AG04450 (cell line): ENCODE measurements at regions of chr9 and their contacts with region 1.

Region 1: DNA sequence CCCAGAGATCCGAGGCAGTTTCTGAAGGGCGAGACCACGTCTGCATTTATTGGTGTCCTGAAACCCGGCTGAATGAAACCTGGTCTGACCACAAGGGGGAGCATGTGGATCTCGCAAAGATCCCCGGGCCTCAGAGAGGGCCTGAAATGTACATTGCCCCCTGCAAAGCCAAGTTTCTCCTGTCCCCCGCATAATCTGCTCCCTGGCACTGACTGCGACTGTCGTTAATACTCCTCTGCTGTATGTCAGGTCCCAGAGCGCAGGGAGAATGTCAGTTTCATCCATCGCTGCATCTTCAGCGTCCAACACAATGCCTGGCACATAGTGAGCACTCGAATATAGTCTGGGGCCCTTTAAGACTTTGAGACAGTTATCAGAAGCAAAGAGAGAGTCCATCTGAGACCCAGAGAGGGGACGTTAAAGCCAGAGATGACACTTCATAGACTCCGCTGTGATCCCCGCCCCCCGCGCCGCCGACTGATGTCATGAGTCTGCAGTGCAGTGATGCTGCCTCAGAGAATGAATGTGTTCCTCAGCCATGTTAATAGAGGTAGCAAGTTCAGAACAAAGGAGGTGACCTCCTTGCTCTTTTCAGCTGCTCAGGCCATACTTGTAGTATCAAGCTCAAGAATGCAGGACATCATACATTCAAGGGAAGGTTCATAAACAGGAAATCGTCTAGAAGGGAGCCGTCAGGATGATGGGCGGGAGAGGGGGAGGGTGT is 74.5 kb upstream of the BARHL1 start:
- DNase-seq: peak; percentile 34
- H3K4me3 ChIP-seq: no peak overlapping the region
- H3K27ac ChIP-seq: no peak overlapping the region
- H3K27me3 ChIP-seq: peaks cover 45% of the 10 kb centered on the region
- CTCF ChIP-seq: peak; percentile 84

Region 2: DNA sequence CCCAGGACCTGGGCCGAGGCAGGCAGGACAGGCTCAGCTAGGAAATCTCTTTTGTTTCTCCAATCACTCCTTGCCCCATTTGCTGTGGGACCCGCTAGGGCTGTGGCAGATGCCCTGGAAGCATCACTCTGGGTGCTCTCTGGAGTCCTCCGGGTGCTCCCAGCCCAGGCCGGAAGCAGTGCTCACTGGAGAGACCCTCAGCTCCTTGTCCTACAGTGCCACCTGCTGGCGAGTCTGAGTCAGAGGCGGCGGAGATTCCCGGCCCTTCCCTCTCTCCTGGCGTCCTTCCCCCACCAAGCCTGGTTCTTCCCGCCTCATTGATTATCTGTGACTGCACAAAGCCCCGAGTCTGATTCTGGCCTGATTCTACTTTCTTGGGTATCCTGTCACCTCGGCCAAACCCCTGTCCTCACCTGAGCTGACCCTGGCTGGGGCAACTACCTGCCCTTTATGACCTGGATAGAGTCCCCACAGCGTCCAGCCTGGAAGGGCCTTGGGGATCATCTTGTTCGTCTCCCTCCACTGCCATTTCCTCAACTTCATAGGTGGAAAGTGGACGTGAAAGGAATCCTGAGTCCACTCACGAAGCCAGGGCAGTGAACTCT is 67.2 kb after region 1 on chr9:
- CTCF ChIA-PET with region 1: interaction called, 56 read pairs
- POLR2A ChIA-PET with region 1: no interaction called
- DNase-seq: peak; percentile 18
- H3K4me3 ChIP-seq: no peak overlapping the region
- H3K27ac ChIP-seq: no peak overlapping the region
- H3K27me3 ChIP-seq: peaks cover 51% of the 10 kb centered on the region
- CTCF ChIP-seq: peak; percentile 91

Region 3: DNA sequence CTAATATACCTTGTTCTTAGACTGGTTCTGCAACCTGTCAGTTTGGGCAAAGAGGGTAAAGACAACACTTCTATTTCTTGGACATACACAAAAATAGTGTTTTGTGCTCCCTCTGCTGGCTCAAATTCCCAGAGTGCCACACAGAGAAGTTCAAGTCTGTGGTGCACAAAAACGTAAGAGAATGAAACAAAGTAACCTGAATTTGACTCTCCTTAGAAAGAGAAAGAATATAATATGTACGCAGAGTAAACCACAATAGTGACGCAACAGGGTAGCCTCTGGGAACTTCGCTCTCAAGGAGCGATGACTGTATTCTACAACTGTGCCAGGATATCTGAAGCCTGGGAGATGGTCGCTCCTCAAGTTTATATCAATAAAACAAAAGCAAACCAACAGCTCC is 143.3 kb after region 1 on chr9:
- CTCF ChIA-PET with region 1: interaction called, 19 read pairs
- POLR2A ChIA-PET with region 1: no interaction called
- DNase-seq: peak; percentile 90
- H3K4me3 ChIP-seq: no peak overlapping the region
- H3K27ac ChIP-seq: peak overlapping the region; percentile 73
- H3K27me3 ChIP-seq: no peaks in the 10 kb centered on the region
- CTCF ChIP-seq: peak; percentile 77